ENCODE measurements at regions of chr6 and their contacts with region 1.

Region 1: GRCh38 chr6:99254616-99255550 is 94.6 kb downstream of the FAXC start:
- DNase-seq: no peak
- H3K4me3 ChIP-seq: no peak overlapping the region
- H3K27ac ChIP-seq: no peak overlapping the region
- H3K4me1 ChIP-seq: no peaks in the 10 kb centered on the region
- H3K27me3 ChIP-seq: peaks cover 2% of the 10 kb centered on the region
- CTCF ChIP-seq: no peak

Region 2: DNA sequence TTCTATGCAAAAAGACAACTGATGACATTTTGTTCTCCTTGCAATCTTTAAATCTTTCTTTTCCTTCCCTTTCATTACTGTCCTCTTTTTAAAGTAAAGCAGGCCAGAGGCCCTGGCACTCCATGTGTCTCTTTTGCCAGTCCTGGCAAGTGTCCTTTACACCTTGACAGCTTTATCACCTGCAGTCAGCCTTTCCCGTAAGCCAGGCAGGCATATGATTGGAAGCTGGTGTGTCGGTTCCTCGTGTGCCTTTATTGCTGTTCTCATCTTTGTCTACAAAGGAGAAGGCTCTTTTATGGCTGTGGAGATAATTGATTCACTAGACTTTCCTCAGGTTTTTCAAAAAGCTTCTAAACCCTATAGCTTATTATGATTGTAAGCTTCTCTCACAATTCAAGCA is 144.9 kb before region 1 on chr6:
- CTCF ChIA-PET with region 1: no interaction called
- dilution Hi-C with region 1: no loop called
- in situ Hi-C with region 1: no loop called
- intact Hi-C with region 1: no loop called
- DNase-seq: no peak
- H3K4me3 ChIP-seq: no peak overlapping the region
- H3K27ac ChIP-seq: no peak overlapping the region
- H3K4me1 ChIP-seq: no peaks in the 10 kb centered on the region
- H3K27me3 ChIP-seq: peaks cover 8% of the 10 kb centered on the region
- CTCF ChIP-seq: no peak

Region 3: GRCh38 chr6:99270826-99271225 is 15.9 kb after region 1 on chr6:
- CTCF ChIA-PET with region 1: no interaction called
- dilution Hi-C with region 1: no loop called
- in situ Hi-C with region 1: no loop called
- intact Hi-C with region 1: no loop called
- DNase-seq: no peak
- H3K4me3 ChIP-seq: no peak overlapping the region
- H3K27ac ChIP-seq: no peak overlapping the region
- H3K4me1 ChIP-seq: no peaks in the 10 kb centered on the region
- H3K27me3 ChIP-seq: no peaks in the 10 kb centered on the region
- CTCF ChIP-seq: no peak

Region 4: GRCh38 chr6:99305021-99305554 is 50.2 kb after region 1 on chr6:
- CTCF ChIA-PET with region 1: no interaction called
- dilution Hi-C with region 1: loop called (anchors 5 kb)
- in situ Hi-C with region 1: no loop called
- intact Hi-C with region 1: no loop called
- DNase-seq: no peak
- H3K4me3 ChIP-seq: no peak overlapping the region
- H3K27ac ChIP-seq: no peak overlapping the region
- H3K4me1 ChIP-seq: no peaks in the 10 kb centered on the region
- H3K27me3 ChIP-seq: no peaks in the 10 kb centered on the region
- CTCF ChIP-seq: no peak